Endothelial cell of umbilical vein (primary cell): ENCODE measurements at regions of chr4 and their contacts with region 1.

Region 1: GRCh38 chr4:88823058-88823919 is 125.7 kb upstream of the NAP1L5 start:
- DNase-seq: peak; percentile 92
- H3K4me3 ChIP-seq: peak overlapping the region; percentile 12 to 61 (median 39)
- H3K27ac ChIP-seq: peak overlapping the region; percentile 81
- H3K4me1 ChIP-seq: peaks cover 17% of the 10 kb centered on the region
- H3K27me3 ChIP-seq: no peaks in the 10 kb centered on the region
- CTCF ChIP-seq: no peak
- POLR2A ChIP-seq: peak; percentile 64

Region 2: DNA sequence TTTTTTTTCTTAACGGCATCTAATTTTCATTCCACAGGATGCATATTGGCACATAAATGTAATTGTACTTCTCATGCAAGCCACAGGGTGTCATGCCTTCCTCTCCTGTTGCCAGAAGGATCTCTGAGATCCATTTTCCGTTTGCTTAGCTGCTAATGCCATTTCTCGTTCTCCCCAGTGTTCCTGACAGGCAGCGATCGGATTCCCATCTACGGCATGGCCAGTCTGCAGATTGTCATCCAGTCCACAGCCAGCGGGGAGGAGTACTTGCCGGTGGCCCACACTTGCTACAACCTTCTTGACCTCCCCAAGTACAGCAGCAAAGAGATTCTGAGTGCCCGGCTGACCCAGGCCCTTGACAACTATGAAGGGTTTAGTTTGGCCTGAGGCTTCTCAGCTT is 116.7 kb before region 1 on chr4:
- CTCF ChIA-PET with region 1: interaction called, 7 read pairs
- POLR2A ChIA-PET with region 1: no interaction called
- dilution Hi-C with region 1: no loop called
- intact Hi-C with region 1: loop called (anchors 1 kb)
- DNase-seq: peak; percentile 67
- H3K4me3 ChIP-seq: no peak overlapping the region
- H3K27ac ChIP-seq: no peak overlapping the region
- H3K4me1 ChIP-seq: no peaks in the 10 kb centered on the region
- H3K27me3 ChIP-seq: no peaks in the 10 kb centered on the region
- CTCF ChIP-seq: peak; percentile 32 to 58
- POLR2A ChIP-seq: no peak

Region 3: GRCh38 chr4:88843067-88843685 is 19.9 kb after region 1 on chr4:
- CTCF ChIA-PET with region 1: no interaction called
- POLR2A ChIA-PET with region 1: no interaction called
- dilution Hi-C with region 1: no loop called
- intact Hi-C with region 1: loop called (anchors 2 kb)
- DNase-seq: peak; percentile 87
- H3K4me3 ChIP-seq: no peak overlapping the region
- H3K27ac ChIP-seq: no peak overlapping the region
- H3K4me1 ChIP-seq: peaks cover 11% of the 10 kb centered on the region
- H3K27me3 ChIP-seq: peaks cover 0 to 3% of the 10 kb centered on the region in 2 experiments
- CTCF ChIP-seq: no peak
- POLR2A ChIP-seq: no peak

Region 4: DNA sequence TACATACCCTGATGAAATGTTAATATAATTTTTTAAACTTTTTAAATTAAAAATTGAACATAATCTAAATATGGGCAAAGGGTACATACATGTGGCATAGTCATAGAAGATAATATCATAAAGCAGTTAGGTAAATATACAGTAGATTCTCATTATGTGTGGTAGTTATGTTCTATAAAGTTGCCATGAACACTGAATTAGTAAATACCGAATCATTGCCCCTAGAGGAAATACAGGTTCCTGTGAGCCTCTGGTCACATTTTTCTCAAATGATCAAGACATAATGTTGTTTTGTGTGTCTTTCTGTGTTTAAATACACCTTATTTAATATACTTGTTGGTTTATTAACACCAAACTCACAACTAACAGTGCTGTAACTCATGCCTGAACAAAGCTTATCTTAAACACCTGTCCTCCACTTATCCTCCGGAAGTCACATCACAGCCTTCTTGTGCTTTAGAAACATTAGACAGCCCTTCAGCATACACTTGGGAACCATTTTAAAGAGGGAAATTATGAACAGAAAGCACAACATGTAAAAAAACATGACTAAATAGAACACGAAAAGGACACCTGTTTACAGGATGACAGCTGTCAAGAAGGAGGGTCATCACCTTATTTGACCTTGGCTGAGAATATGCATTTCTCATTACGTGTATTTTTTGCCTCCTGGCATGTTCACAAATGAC is 43.7 kb after region 1 on chr4:
- CTCF ChIA-PET with region 1: no interaction called
- POLR2A ChIA-PET with region 1: no interaction called
- dilution Hi-C with region 1: no loop called
- intact Hi-C with region 1: loop called (anchors 1 kb)
- DNase-seq: peak; percentile 83
- H3K4me3 ChIP-seq: no peak overlapping the region
- H3K27ac ChIP-seq: peak overlapping the region; percentile 84
- H3K4me1 ChIP-seq: peaks cover 38% of the 10 kb centered on the region
- H3K27me3 ChIP-seq: no peaks in the 10 kb centered on the region
- CTCF ChIP-seq: no peak
- POLR2A ChIP-seq: no peak

Region 5: DNA sequence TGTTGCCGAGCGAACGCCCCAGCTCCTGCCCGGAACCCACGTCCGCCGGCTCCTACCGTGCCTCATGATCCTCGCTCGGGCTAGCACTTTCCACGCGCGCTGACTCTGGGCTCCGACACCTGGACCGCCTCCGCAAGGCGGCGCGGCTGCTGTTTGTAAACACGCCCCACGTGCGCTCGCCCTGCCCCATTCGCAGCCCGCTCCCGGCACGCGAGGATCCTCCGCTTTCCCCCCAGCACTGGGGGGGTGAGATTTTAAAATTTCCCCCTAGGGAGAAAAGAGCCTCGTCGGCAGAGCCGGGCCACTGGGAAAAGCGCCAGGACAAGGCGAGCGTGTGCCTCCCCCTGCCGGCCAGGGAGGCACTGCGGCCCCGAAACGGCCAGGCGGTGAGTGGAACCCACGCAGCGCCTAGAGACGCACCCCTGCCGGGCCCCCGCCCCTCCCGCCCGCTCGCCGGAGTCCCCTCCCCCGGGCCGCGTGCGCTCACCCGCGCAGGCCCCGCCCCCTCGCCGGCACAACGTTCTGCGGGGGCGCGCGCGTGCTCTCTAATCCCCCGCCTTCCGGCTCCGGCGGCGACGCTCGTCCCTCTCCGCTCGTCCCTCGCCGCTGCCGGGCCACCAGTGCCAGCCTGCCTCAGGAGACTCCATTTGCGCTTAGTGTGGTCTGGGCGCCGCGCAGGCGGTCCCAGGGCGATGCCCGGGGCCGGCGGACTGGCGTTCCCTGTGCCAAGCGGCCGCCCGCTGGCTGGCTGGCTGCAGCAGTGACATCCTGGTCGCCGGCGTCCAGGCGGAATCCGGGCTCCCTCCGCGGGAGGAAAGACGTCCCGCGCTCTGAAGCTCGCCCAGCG is 287.9 kb after region 1 on chr4 and contains the start of gene TIGD2:
- CTCF ChIA-PET with region 1: no interaction called
- POLR2A ChIA-PET with region 1: no interaction called
- dilution Hi-C with region 1: no loop called
- intact Hi-C with region 1: loop called (anchors 1 kb)
- DNase-seq: peak; percentile 84
- H3K4me3 ChIP-seq: peak within 1 kb of the TSS; percentile 58 to 82 (median 59)
- H3K27ac ChIP-seq: peak within 1 kb of the TSS; percentile 40
- H3K4me1 ChIP-seq: peaks cover 13% of the 10 kb centered on the region
- H3K27me3 ChIP-seq: peaks cover 12 to 15% of the 10 kb centered on the region in 2 experiments
- CTCF ChIP-seq: peak; percentile 64 to 85
- POLR2A ChIP-seq: peak; percentile 73
- total RNA-seq, gene TIGD2: 4.2 and 5.0 TPM in 2 replicates

Region 6: GRCh38 chr4:89158884-89159503 is 335.7 kb after region 1 on chr4:
- CTCF ChIA-PET with region 1: interaction called, 5 read pairs
- POLR2A ChIA-PET with region 1: no interaction called
- dilution Hi-C with region 1: no loop called
- intact Hi-C with region 1: loop called (anchors 5 kb)
- DNase-seq: peak; percentile 77
- H3K4me3 ChIP-seq: no peak overlapping the region
- H3K27ac ChIP-seq: no peak overlapping the region
- H3K4me1 ChIP-seq: peaks cover 23% of the 10 kb centered on the region
- H3K27me3 ChIP-seq: no peaks in the 10 kb centered on the region
- CTCF ChIP-seq: peak; percentile 44 to 47
- POLR2A ChIP-seq: no peak